IMR-90 (cell line): ENCODE measurements at regions of chrX and their contacts with region 1.

Region 1: GRCh38 chrX:130916636-130917422 is 13.8 kb upstream of the ENOX2 start:
- DNase-seq: peak; percentile 54
- ATAC-seq: peak; percentile 75
- H3K4me3 ChIP-seq: no peak overlapping the region
- H3K27ac ChIP-seq: no peak overlapping the region
- H3K4me1 ChIP-seq: no peaks in the 10 kb centered on the region
- H3K27me3 ChIP-seq: peaks cover 2% of the 10 kb centered on the region; the same call in 1 of the 2 replicates
- CTCF ChIP-seq: peak; percentile 80
- POLR2A ChIP-seq: no peak
- RAD21 ChIP-seq: peak; percentile 91

Region 2: GRCh38 chrX:130060122-130061069 is 856.4 kb before region 1 on chrX:
- CTCF ChIA-PET with region 1: no interaction called
- POLR2A ChIA-PET with region 1: no interaction called
- dilution Hi-C with region 1: no loop called
- in situ Hi-C with region 1: no loop called
- intact Hi-C with region 1: no loop called
- DNase-seq: peak; percentile 37
- ATAC-seq: peak; percentile 91
- H3K4me3 ChIP-seq: peak overlapping the region; percentile 76
- H3K27ac ChIP-seq: peak overlapping the region; percentile 38; the same call in 1 of the 2 replicates
- H3K4me1 ChIP-seq: peaks cover 1% of the 10 kb centered on the region; the same call in 1 of the 2 replicates
- H3K27me3 ChIP-seq: no peaks in the 10 kb centered on the region; the same call in 1 of the 2 replicates
- CTCF ChIP-seq: peak; percentile 80
- POLR2A ChIP-seq: no peak
- RAD21 ChIP-seq: peak; percentile 75

Region 3: DNA sequence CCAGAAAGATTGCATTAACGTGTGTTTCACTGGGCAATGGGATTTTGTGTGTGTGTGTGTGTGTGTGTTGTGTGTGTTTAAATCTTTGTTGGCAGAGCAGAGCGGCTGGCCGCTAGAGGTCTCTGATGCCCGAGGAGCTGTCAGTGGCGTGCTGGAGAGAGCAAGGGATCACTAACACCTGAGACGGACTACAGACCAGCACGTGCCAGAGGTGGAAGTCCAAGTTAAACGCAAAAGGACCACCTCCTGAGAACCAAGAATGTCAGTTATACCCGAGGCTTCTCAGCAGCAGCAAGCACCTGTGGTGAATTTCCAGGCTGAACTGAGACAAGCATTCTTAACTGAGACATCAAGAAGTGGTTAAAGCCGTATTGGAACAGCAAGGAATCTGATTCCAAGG is 586.1 kb before region 1 on chrX:
- CTCF ChIA-PET with region 1: no interaction called
- POLR2A ChIA-PET with region 1: no interaction called
- dilution Hi-C with region 1: no loop called
- in situ Hi-C with region 1: no loop called
- intact Hi-C with region 1: loop called (anchors 2 kb)
- DNase-seq: peak; percentile 40
- ATAC-seq: peak; percentile 72; the same call in 1 of the 2 replicates
- H3K4me3 ChIP-seq: no peak overlapping the region
- H3K27ac ChIP-seq: no peak overlapping the region
- H3K4me1 ChIP-seq: no peaks in the 10 kb centered on the region
- H3K27me3 ChIP-seq: peaks cover 2% of the 10 kb centered on the region; the same call in 1 of the 2 replicates
- CTCF ChIP-seq: peak; percentile 41
- POLR2A ChIP-seq: no peak
- RAD21 ChIP-seq: peak; percentile 48

Region 4: GRCh38 chrX:130539721-130540321 is 377.0 kb before region 1 on chrX:
- CTCF ChIA-PET with region 1: interaction called, 6 read pairs
- POLR2A ChIA-PET with region 1: no interaction called
- dilution Hi-C with region 1: no loop called
- in situ Hi-C with region 1: loop called (anchors 10 kb)
- intact Hi-C with region 1: loop called (anchors 1 kb)
- DNase-seq: peak; percentile 45
- ATAC-seq: peak; percentile 51; the same call in 1 of the 2 replicates
- H3K4me3 ChIP-seq: no peak overlapping the region
- H3K27ac ChIP-seq: no peak overlapping the region
- H3K4me1 ChIP-seq: no peaks in the 10 kb centered on the region
- H3K27me3 ChIP-seq: peaks cover 4% of the 10 kb centered on the region
- CTCF ChIP-seq: peak; percentile 65
- POLR2A ChIP-seq: no peak
- RAD21 ChIP-seq: peak; percentile 51

Region 5: GRCh38 chrX:130575831-130576389 is 340.9 kb before region 1 on chrX:
- CTCF ChIA-PET with region 1: interaction called, 23 read pairs
- POLR2A ChIA-PET with region 1: no interaction called
- dilution Hi-C with region 1: no loop called
- in situ Hi-C with region 1: no loop called
- intact Hi-C with region 1: loop called (anchors 1 kb)
- DNase-seq: peak; percentile 33
- ATAC-seq: peak; percentile 81
- H3K4me3 ChIP-seq: no peak overlapping the region
- H3K27ac ChIP-seq: no peak overlapping the region
- H3K4me1 ChIP-seq: no peaks in the 10 kb centered on the region
- H3K27me3 ChIP-seq: peaks cover 2% of the 10 kb centered on the region; the same call in 1 of the 2 replicates
- CTCF ChIP-seq: peak; percentile 74
- POLR2A ChIP-seq: no peak
- RAD21 ChIP-seq: peak; percentile 84